Activated CD4-positive, alpha-beta T cell treated with anti-CD3 and anti-CD28 coated beads for 36 hours (primary cell): ENCODE measurements at regions of chr10 and their contacts with region 1.

Region 1: GRCh38 chr10:77756319-77757232 is 119.0 kb upstream of the KCNMA1 start:
- DNase-seq: peak; percentile 57
- ATAC-seq: no peak
- H3K4me3 Mint-ChIP-seq: no peak overlapping the region
- H3K27ac Mint-ChIP-seq: no peak overlapping the region
- H3K4me1 Mint-ChIP-seq: no peaks in the 10 kb centered on the region
- H3K27me3 Mint-ChIP-seq: peaks cover 14% of the 10 kb centered on the region

Region 2: GRCh38 chr10:77478247-77478961 is 278.2 kb before region 1 on chr10:
- CTCF ChIA-PET with region 1: no interaction called
- POLR2A ChIA-PET with region 1: no interaction called
- intact Hi-C with region 1: no loop called
- DNase-seq: no peak
- ATAC-seq: no peak
- H3K4me3 Mint-ChIP-seq: no peak overlapping the region
- H3K27ac Mint-ChIP-seq: no peak overlapping the region
- H3K4me1 Mint-ChIP-seq: no peaks in the 10 kb centered on the region
- H3K27me3 Mint-ChIP-seq: no peaks in the 10 kb centered on the region

Region 3: GRCh38 chr10:77718957-77719356 is 37.6 kb before region 1 on chr10:
- CTCF ChIA-PET with region 1: no interaction called
- POLR2A ChIA-PET with region 1: no interaction called
- intact Hi-C with region 1: loop called in 1 of 2 experiments (anchors 2 kb)
- DNase-seq: no peak
- ATAC-seq: no peak
- H3K4me3 Mint-ChIP-seq: no peak overlapping the region
- H3K27ac Mint-ChIP-seq: no peak overlapping the region
- H3K4me1 Mint-ChIP-seq: peaks cover 2% of the 10 kb centered on the region
- H3K27me3 Mint-ChIP-seq: peaks cover 5% of the 10 kb centered on the region